PC-9 (cell line): ENCODE measurements at regions of chr7 and their contacts with region 1.

Region 1: DNA sequence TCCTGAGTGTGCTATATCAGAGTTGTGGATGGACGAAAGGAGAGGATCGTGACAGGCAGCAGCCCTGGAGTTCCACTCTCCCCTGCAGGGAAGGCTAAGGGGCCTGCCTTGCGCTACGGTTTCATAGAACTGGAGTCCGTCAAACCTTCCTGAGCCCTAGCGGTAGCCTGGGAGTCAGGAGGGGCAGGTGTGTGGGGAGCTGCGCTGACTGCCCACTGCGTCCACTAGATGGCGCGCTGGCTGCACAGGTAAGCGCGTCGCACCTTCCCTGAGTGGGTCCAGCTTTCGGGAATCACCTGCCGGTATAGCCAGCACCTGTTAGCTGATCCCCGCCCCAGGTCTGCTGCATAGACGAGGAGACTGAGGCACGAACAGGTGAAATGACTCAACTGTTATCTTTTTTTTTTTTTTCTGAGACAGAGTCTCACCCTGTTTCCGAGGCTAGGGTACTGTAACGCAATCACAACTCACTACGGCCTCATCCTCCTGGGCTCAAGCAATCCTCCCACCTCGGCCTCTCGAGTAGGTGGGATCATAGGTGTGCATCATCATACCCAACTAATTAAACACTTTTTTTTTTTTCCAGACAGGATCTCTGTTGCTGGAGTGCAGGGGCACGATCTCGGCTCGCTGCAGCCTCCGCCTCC is 20.2 kb upstream of the BAIAP2L1 start:
- DNase-seq: peak; percentile 69 to 88
- H3K4me3 ChIP-seq: peak overlapping the region; percentile 6; the same call in 1 of the 2 replicates
- H3K27ac ChIP-seq: no peak overlapping the region
- H3K4me1 ChIP-seq: peaks cover 44% of the 10 kb centered on the region
- H3K27me3 ChIP-seq: no peaks in the 10 kb centered on the region
- CTCF ChIP-seq: peak; percentile 94

Region 2: DNA sequence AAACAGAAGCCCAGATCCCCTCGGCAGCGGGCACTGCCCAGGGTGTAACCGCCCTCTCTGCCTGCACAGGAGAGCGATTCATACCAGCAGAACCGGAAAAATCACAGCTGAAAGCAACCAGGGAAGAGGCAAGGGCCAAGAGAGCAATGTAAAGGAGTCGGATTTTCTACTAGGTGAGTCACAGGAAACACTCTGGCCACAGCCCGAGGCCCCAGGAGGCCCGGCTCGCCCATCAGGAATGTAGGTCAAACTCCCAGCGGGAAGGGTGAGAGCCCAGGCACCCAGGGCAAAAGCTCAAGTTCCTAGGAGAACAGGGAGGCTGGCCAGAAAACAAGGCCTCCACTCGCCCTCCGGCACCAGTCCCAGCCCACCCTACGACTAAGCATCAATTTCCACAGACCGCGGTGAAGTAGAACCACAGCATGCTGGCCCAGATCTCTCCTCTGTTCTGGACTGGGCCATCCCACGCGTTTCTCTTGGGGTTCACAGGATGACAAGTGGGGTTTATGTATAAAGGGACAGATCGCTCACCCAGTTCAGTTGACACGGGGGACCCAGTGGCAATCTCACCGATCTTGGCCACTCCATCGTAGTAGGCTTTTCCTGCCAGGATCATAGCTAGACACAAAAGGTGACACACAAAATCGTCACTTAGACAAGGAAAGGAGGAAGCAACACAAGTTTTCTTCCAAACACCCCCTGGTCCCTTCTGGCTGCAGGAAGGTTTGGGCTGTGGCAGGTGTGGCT is 66.4 kb before region 1 on chr7:
- CTCF ChIA-PET with region 1: no interaction called
- POLR2A ChIA-PET with region 1: interaction called, 4 read pairs
- intact Hi-C with region 1: loop called (anchors 2 kb)
- DNase-seq: peak; percentile 96 to 97
- H3K4me3 ChIP-seq: peak overlapping the region; percentile 52
- H3K27ac ChIP-seq: peak overlapping the region; percentile 94
- H3K4me1 ChIP-seq: peaks cover 93% of the 10 kb centered on the region
- H3K27me3 ChIP-seq: no peaks in the 10 kb centered on the region
- CTCF ChIP-seq: no peak

Region 3: DNA sequence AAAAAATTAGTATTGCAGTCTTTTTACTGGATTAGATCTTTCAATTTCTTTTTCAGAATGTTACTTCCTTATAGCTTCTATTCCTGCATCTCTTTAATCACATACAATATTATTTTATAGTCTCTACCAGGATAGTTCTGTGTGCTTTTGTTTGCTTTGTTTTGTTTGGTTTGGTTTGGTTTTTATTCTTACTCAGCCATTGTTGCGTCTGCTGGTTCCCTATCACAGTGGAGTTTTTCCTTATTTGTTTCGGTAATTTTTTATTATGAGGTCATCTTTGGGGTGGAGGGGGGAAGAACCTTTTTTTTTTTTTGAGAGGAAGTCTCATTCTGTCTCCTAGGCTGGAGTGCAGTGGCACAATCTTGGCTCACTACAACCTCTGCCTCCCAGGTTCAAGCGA is 11.2 kb before region 1 on chr7:
- CTCF ChIA-PET with region 1: interaction called, 12 read pairs
- POLR2A ChIA-PET with region 1: interaction called, 6 read pairs
- intact Hi-C with region 1: no loop called
- DNase-seq: no peak
- H3K4me3 ChIP-seq: no peak overlapping the region
- H3K27ac ChIP-seq: peak overlapping the region; percentile 28; the same call in 1 of the 2 replicates
- H3K4me1 ChIP-seq: 0 out of 2 replicates have a peak, but pooled peaks cover 6% of the 10 kb centered on the region
- H3K27me3 ChIP-seq: no peaks in the 10 kb centered on the region
- CTCF ChIP-seq: no peak

Region 4: DNA sequence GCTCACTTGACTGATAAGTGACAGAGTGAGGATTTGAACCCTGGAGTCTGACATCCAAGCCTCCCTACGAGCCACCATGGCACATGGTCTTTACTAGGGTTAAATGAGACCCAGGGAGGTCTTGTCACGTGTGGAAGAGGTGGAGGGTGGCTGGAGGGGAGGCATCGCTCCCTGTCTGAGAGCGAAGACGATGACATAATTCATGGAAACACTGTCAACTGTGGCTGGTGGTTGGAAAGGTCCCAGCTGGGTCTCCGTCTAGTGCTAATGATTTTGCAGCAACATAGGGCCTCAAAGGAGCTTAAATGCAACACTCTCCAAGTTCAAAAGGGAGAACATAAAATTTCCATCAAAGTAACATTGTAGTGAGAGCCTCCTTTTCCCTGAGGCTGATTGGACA is 79.7 kb after region 1 on chr7:
- CTCF ChIA-PET with region 1: no interaction called
- POLR2A ChIA-PET with region 1: no interaction called
- intact Hi-C with region 1: no loop called
- DNase-seq: no peak
- H3K4me3 ChIP-seq: no peak overlapping the region
- H3K27ac ChIP-seq: no peak overlapping the region
- H3K4me1 ChIP-seq: no peaks in the 10 kb centered on the region
- H3K27me3 ChIP-seq: peaks cover 42% of the 10 kb centered on the region
- CTCF ChIP-seq: no peak